Posterior vena cava (tissue), 2 donors: ENCODE measurements at regions of chr6 and their contacts with region 1.

Region 1: DNA sequence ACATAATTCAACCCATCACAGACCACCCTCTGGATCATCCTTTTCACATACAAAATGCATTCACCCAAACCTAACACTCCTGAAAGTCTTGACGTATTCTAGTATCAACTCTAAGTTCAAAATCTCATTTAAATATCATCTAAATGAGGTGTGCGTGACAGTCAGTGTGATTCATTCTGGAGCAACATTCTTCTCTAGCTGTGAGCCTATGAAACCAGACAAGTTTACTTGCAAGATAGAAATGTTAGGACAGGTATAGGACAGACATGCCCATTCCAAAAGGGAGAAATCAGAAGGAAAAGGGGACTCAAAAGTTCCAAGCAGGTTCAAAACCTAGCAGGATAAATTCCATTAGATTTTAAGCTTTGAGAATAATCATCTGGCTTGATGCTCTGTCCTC is 329.7 kb downstream of the CD83 start:
- DNase-seq: no peak

Region 2: GRCh38 chr6:15615802-15616201 is 1168.6 kb after region 1 on chr6:
- intact Hi-C with region 1: loop called in 1 of 2 experiments (anchors 5 kb)
- DNase-seq: no peak